GM12878 (cell line): ENCODE measurements at regions of chr20 and their contacts with region 1.

Region 1: DNA sequence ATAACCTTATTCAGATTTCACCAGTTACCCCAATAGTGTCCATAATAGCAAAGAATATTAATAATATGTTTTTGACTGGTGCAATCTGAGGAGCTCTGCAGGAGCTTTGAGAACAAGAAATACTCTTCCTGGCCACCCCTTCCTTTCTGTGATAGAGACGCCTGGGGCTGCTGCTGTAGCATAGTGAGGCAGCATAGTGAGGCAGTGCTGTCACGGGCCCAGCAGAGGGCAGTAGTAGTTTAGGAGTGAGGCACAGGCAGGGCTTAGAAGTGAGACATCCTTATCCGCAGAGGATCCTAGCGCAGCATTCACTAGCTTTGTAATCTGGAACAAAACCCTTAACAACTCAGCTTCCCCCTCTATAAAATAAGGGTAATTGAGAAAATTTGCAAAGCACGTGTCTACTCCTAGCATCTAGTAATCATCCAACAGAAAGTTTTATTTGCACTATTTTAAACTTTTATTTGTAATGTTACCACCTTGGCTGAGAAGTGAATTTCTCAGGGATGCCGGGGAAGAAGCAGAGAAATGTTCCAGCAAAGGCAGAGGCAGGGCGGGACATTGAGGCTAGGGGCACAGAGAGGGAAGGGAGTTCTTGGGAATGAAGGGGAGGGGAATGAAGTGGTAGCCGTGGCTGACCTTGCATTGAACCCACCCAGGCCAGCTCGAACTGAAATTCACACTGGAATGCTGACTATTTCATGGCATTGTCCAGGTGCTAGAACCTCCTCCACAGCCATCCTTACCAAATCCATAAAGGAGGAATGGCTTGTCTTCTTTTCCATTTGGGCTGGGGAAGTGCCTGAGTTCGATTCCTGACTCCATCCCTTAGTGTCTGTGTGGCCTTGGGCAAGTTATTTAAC is 78.8 kb downstream of the CDS2 start:
- DNase-seq: no peak
- ATAC-seq: peak; percentile 100
- H3K4me3 ChIP-seq: no peak overlapping the region
- H3K27ac ChIP-seq: no peak overlapping the region
- H3K4me1 ChIP-seq: no peaks in the 10 kb centered on the region
- H3K27me3 ChIP-seq: no peaks in the 10 kb centered on the region
- CTCF ChIP-seq: peak; percentile 88 to 89 (median 89)
- EP300 ChIP-seq: no peak
- POLR2A ChIP-seq: no peak
- RAD21 ChIP-seq: peak; percentile 76

Region 2: GRCh38 chr20:5046656-5047339 is 158.8 kb before region 1 on chr20:
- CTCF ChIA-PET with region 1: no interaction called
- POLR2A ChIA-PET with region 1: no interaction called
- RAD21 ChIA-PET with region 1: no interaction called
- SMC1A ChIA-PET with region 1: no interaction called
- in situ Hi-C with region 1: no loop called
- intact Hi-C with region 1: no loop called
- DNase-seq: no peak
- ATAC-seq: peak; percentile 89
- H3K4me3 ChIP-seq: no peak overlapping the region
- H3K27ac ChIP-seq: no peak overlapping the region
- H3K4me1 ChIP-seq: no peaks in the 10 kb centered on the region
- H3K27me3 ChIP-seq: no peaks in the 10 kb centered on the region; a peak in 1 of 4 replicates
- CTCF ChIP-seq: no peak
- EP300 ChIP-seq: no peak
- POLR2A ChIP-seq: no peak
- RAD21 ChIP-seq: no peak

Region 3: GRCh38 chr20:5181956-5182355 is 23.6 kb before region 1 on chr20:
- CTCF ChIA-PET with region 1: interaction called, 13 read pairs
- POLR2A ChIA-PET with region 1: no interaction called
- RAD21 ChIA-PET with region 1: no interaction called
- SMC1A ChIA-PET with region 1: no interaction called
- in situ Hi-C with region 1: no loop called
- intact Hi-C with region 1: no loop called
- DNase-seq: no peak
- ATAC-seq: no peak
- H3K4me3 ChIP-seq: no peak overlapping the region
- H3K27ac ChIP-seq: no peak overlapping the region
- H3K4me1 ChIP-seq: no peaks in the 10 kb centered on the region
- H3K27me3 ChIP-seq: no peaks in the 10 kb centered on the region
- CTCF ChIP-seq: no peak
- EP300 ChIP-seq: no peak
- POLR2A ChIP-seq: no peak
- RAD21 ChIP-seq: no peak

Region 4: DNA sequence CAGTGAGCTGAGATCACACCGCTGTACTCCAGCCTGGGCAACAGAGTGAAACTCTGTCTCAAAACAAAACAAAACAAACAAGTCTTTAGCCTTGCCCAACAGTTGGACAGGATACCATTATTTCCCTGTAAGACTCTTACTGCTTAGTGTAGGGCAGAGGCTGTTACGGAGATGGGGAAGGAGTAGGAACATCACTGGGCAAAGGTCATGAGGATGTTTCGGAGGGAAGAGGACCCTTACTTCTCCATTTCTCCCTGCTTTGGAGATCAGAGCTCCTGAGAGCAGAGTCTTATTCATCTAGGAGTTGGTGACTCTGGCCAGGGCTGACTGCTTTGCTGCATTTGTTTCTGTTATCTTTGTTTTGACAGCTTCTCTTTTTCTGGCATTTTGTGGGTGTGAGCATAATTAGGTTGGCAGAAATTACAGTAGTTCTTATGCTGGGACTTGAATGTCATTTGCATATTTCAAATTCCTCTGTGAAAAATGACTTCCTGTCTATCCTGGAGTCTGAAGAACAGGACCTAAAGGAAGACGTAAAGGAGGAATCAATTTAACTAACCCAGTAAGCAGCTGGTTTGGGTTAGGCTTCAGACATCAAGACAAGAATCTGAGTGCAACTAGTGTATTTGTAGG is 10.2 kb after region 1 on chr20:
- CTCF ChIA-PET with region 1: interaction called, 114 read pairs
- POLR2A ChIA-PET with region 1: no interaction called
- RAD21 ChIA-PET with region 1: interaction called, 3 read pairs
- SMC1A ChIA-PET with region 1: interaction called, 16 read pairs
- in situ Hi-C with region 1: no loop called
- intact Hi-C with region 1: no loop called
- DNase-seq: no peak
- ATAC-seq: no peak
- H3K4me3 ChIP-seq: no peak overlapping the region
- H3K27ac ChIP-seq: no peak overlapping the region
- H3K4me1 ChIP-seq: no peaks in the 10 kb centered on the region
- H3K27me3 ChIP-seq: no peaks in the 10 kb centered on the region
- CTCF ChIP-seq: no peak
- EP300 ChIP-seq: no peak
- POLR2A ChIP-seq: no peak
- RAD21 ChIP-seq: no peak

Region 5: DNA sequence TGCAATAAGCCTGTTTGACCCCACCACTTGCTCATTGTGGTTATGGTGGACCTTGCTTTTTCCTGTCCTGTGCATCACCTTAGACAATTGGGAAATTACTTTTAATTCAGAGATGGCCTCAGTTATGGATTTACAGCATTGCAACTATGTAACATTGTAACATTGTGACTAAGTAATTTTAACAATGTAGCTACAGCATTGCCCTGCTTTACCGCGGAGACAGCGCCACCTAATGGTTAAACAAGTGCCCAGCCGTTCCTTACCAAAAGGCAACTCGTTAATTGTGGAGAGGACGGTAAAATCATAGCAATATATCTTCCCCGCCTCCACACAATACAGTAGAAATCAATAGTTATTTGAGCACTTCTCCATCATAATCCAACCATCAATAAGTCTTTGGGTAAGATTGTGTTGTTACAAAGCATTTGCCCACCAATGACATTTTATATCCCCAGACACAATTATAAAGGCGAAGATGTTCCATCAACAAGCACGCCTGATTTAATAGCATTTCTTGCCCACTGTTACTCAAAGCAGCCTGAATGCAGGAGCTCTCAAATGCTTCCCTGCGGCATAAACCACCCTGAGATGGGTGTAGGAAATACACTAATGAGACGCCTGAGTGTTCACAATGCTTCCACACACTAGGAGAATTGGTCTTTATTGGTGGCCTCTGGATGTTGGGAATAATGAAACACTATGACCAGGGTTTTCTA is 17.5 kb after region 1 on chr20:
- CTCF ChIA-PET with region 1: interaction called, 114 read pairs
- POLR2A ChIA-PET with region 1: no interaction called
- RAD21 ChIA-PET with region 1: interaction called, 11 read pairs
- SMC1A ChIA-PET with region 1: interaction called, 16 read pairs
- in situ Hi-C with region 1: no loop called
- intact Hi-C with region 1: loop called (anchors 1 kb)
- DNase-seq: peak; percentile 13
- ATAC-seq: peak; percentile 92
- H3K4me3 ChIP-seq: no peak overlapping the region
- H3K27ac ChIP-seq: no peak overlapping the region
- H3K4me1 ChIP-seq: no peaks in the 10 kb centered on the region
- H3K27me3 ChIP-seq: no peaks in the 10 kb centered on the region
- CTCF ChIP-seq: peak; percentile 75 to 94 (median 91)
- EP300 ChIP-seq: no peak
- POLR2A ChIP-seq: no peak
- RAD21 ChIP-seq: peak; percentile 75